SK-N-SH (cell line): ENCODE measurements at regions of chr12 and their contacts with region 1.

Region 1: GRCh38 chr12:84874125-84874824 is 38.3 kb downstream of the SLC6A15 start:
- DNase-seq: peak; percentile 38
- H3K4me3 ChIP-seq: no peak overlapping the region; a peak in 1 of 4 replicates
- H3K27ac ChIP-seq: no peak overlapping the region
- H3K4me1 ChIP-seq: peaks cover 0 to 2% of the 10 kb centered on the region in 2 experiments; a peak in 2 of 4 replicates
- H3K27me3 ChIP-seq: no peaks in the 10 kb centered on the region
- CTCF ChIP-seq: peak; percentile 87
- EP300 ChIP-seq: no peak
- RAD21 ChIP-seq: peak; percentile 97

Region 2: GRCh38 chr12:84891106-84891838 is 17.0 kb after region 1 on chr12:
- CTCF ChIA-PET with region 1: interaction called, 22 read pairs
- POLR2A ChIA-PET with region 1: no interaction called
- DNase-seq: no peak
- H3K4me3 ChIP-seq: no peak overlapping the region
- H3K27ac ChIP-seq: no peak overlapping the region
- H3K4me1 ChIP-seq: no peaks in the 10 kb centered on the region
- H3K27me3 ChIP-seq: no peaks in the 10 kb centered on the region
- CTCF ChIP-seq: no peak
- EP300 ChIP-seq: no peak
- RAD21 ChIP-seq: no peak

Region 3: DNA sequence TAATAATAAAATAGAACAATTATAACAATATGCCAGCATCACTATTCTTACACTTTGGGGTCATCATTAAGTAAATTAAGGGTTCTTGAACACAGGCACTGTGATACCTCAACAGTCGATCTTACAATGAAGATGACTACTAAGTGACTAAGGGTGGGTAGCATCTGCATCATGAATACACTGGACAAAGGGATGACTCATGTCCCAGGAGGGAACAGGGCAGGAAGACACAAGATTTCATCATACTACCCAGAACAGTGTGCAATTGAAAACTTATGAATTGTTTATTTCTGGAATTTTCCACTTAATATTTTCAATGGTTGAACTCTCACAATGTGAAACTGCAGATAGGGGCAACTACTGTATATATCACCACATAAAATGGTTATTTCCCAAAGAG is 142.1 kb after region 1 on chr12:
- CTCF ChIA-PET with region 1: interaction called, 12 read pairs
- POLR2A ChIA-PET with region 1: no interaction called
- DNase-seq: no peak
- H3K4me3 ChIP-seq: no peak overlapping the region
- H3K27ac ChIP-seq: peak overlapping the region in 1 of 2 experiments; percentile 46; a peak in 1 of 4 replicates
- H3K4me1 ChIP-seq: peaks cover 0 to 3% of the 10 kb centered on the region in 2 experiments; a peak in 1 of 4 replicates
- H3K27me3 ChIP-seq: no peaks in the 10 kb centered on the region
- CTCF ChIP-seq: no peak
- EP300 ChIP-seq: peak in 1 of 2 experiments; percentile 37; a peak in 1 of 4 replicates
- RAD21 ChIP-seq: no peak

Region 4: GRCh38 chr12:85036241-85036707 is 162.0 kb after region 1 on chr12 and contains the starts of genes LRRIQ1 and TSPAN19:
- CTCF ChIA-PET with region 1: interaction called, 292 read pairs
- POLR2A ChIA-PET with region 1: no interaction called
- DNase-seq: peak; percentile 71
- H3K4me3 ChIP-seq: peak within 1 kb of the TSS; percentile 88 to 99
- H3K27ac ChIP-seq: peak within 1 kb of the TSS in 1 of 2 experiments; percentile 48; a peak in 2 of 4 replicates
- H3K4me1 ChIP-seq: no peaks in the 10 kb centered on the region; a peak in 1 of 4 replicates
- H3K27me3 ChIP-seq: no peaks in the 10 kb centered on the region
- CTCF ChIP-seq: no peak
- EP300 ChIP-seq: no peak
- RAD21 ChIP-seq: no peak
- polyA plus RNA-seq, gene LRRIQ1: 0.39 and 0.67 TPM in 2 replicates
- polyA plus RNA-seq, gene TSPAN19: 0.05 and 0.06 TPM in 2 replicates